Activated B cell treated with CpG ODN at 0.5 μM for 24 hours (primary cell): ENCODE measurements at regions of chr10 and their contacts with region 1.

Region 1: DNA sequence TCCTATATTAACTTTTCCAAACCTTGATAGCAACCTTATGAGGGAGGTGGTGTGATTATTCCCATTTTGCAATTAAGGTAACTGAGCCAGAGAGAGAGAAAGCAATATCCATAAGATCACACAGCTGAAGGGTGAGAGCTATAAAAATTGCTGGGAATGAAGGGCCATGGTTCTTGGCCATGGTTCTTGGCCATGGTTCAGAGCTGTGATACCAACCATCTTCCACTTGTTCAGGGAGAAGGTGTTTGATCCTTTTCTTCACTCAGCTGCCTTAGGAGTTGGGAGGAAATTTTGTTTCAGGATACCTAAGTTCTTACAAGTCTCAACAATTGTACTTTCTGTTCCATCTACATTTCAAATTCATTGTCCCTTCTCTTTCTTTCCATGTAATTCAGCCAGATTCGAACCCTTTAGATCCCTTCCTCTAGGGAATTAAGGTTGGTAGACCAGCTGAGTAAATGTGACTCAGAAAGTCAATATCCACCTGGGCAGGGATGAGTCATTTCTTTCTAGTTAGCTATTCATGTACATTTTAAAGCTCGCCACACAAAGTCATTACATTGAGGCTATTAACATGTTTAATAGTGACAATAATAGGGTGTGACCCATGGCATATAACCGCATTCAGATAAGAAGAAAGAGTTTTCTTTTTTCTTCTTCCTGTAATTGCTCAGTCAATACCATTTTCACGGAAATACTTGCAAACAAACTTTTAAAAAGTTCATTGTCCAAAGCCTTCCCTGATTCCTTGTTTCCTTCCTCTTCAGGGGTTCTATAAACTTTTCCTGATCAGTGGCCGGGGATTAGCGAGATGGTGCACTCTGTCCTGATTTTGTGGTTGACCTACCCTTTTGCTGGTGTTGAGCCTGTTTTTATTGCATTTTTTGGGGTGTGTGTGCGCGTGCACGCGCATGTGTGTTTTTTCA is 143.4 kb downstream of the TCF7L2 start:
- DNase-seq: no peak
- ATAC-seq: no peak
- H3K4me3 Mint-ChIP-seq: peak overlapping the region; percentile 21
- H3K27ac Mint-ChIP-seq: no peak overlapping the region
- H3K4me1 Mint-ChIP-seq: peaks cover 21% of the 10 kb centered on the region
- H3K27me3 Mint-ChIP-seq: peaks cover 4% of the 10 kb centered on the region
- CTCF ChIP-seq: no peak

Region 2: DNA sequence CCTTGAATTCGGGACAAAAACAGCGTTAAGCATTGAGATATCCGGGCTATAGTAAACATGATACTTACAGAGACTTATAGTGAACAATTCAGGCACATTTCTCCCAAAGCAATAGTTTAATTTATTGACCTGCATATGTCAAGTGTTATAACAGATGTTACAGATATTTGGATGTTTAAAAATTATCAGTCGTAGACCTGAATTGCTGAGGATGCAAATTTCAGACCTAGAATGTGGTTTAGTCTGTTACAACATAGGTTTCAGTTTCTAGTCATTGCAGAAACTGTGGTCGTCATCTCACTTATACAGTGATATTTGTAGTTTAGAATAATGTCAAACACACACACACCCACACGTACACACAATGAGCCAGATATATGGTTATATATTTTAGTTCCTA is 561.3 kb before region 1 on chr10:
- CTCF ChIA-PET with region 1: no interaction called
- POLR2A ChIA-PET with region 1: no interaction called
- intact Hi-C with region 1: loop called (anchors 2 kb)
- DNase-seq: no peak
- ATAC-seq: peak; percentile 71
- H3K4me3 Mint-ChIP-seq: peak overlapping the region; percentile 76
- H3K27ac Mint-ChIP-seq: peak overlapping the region; percentile 3
- H3K4me1 Mint-ChIP-seq: peaks cover 28% of the 10 kb centered on the region
- H3K27me3 Mint-ChIP-seq: no peaks in the 10 kb centered on the region
- CTCF ChIP-seq: no peak

Region 3: GRCh38 chr10:113179265-113179664 is 85.8 kb after region 1 on chr10:
- CTCF ChIA-PET with region 1: no interaction called
- POLR2A ChIA-PET with region 1: no interaction called
- intact Hi-C with region 1: no loop called
- DNase-seq: no peak
- ATAC-seq: no peak
- H3K4me3 Mint-ChIP-seq: no peak overlapping the region
- H3K27ac Mint-ChIP-seq: no peak overlapping the region
- H3K4me1 Mint-ChIP-seq: peaks cover 5% of the 10 kb centered on the region
- H3K27me3 Mint-ChIP-seq: no peaks in the 10 kb centered on the region
- CTCF ChIP-seq: no peak

Region 4: DNA sequence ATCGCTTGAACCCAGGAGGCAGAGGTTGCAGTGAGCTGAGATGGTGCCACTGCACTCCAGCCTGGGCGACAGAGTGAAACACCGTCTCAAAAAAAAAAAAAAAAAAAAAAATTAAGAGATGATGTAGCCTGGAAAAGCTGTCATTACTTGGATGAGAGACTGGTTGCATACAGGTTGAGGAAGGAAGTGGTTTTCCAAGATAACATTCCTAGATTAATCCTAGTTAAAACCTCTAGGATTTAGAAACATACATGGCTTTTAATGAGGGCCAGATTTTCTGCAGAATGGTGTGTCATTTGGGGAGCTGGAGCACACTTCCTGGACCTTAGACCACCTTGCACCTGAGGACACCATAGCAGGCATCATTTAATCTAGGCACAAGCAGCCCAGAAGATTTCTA is 1163.4 kb after region 1 on chr10:
- CTCF ChIA-PET with region 1: no interaction called
- POLR2A ChIA-PET with region 1: interaction called, 12 read pairs
- intact Hi-C with region 1: no loop called
- DNase-seq: no peak
- ATAC-seq: no peak
- H3K4me3 Mint-ChIP-seq: no peak overlapping the region
- H3K27ac Mint-ChIP-seq: no peak overlapping the region
- H3K4me1 Mint-ChIP-seq: peaks cover 3% of the 10 kb centered on the region
- H3K27me3 Mint-ChIP-seq: peaks cover 5% of the 10 kb centered on the region
- CTCF ChIP-seq: no peak